BJ (cell line): ENCODE measurements at regions of chr17 and their contacts with region 1.

Region 1: DNA sequence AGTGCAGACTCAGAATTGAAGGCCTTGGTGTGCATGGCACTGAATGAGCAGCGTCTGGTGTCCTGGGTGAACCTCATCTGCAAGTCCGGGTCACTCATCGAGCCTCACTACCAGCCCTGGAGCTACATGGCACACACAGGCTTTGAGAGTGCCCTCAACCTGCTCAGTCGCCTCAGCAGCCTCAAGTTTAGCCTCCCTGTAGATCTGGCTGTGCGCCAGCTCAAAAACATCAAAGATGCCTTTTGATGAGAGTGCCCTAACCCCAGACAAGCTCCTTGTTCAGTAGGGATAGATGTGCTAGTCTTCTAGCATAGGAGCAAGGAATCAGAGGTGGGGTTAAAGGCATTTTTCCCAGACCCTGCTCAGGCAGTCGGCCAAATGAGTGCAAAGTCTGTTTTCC is 6.7 kb upstream of the RPL27 start:
- DNase-seq: no peak
- H3K4me3 ChIP-seq: no peak overlapping the region
- H3K27me3 ChIP-seq: no peaks in the 10 kb centered on the region
- CTCF ChIP-seq: no peak

Region 2: GRCh38 chr17:42835732-42836131 is 155.7 kb before region 1 on chr17:
- CTCF ChIA-PET with region 1: no interaction called
- POLR2A ChIA-PET with region 1: no interaction called
- DNase-seq: no peak
- H3K4me3 ChIP-seq: no peak overlapping the region
- H3K27me3 ChIP-seq: no peaks in the 10 kb centered on the region
- CTCF ChIP-seq: no peak

Region 3: GRCh38 chr17:42878123-42878880 is 113.2 kb before region 1 on chr17:
- CTCF ChIA-PET with region 1: no interaction called
- POLR2A ChIA-PET with region 1: no interaction called
- DNase-seq: no peak
- H3K4me3 ChIP-seq: no peak overlapping the region
- H3K27me3 ChIP-seq: peaks cover 13% of the 10 kb centered on the region; the same call in 1 of the 2 replicates
- CTCF ChIP-seq: no peak

Region 4: GRCh38 chr17:43006639-43007551 is 15.4 kb after region 1 on chr17 and contains the start of gene IFI35:
- CTCF ChIA-PET with region 1: no interaction called
- POLR2A ChIA-PET with region 1: interaction called, 13 read pairs
- DNase-seq: peak; percentile 51
- H3K4me3 ChIP-seq: peak within 1 kb of the TSS; percentile 58
- H3K27me3 ChIP-seq: no peaks in the 10 kb centered on the region
- CTCF ChIP-seq: peak; percentile 37; the same call in 1 of the 2 replicates
- polyA plus RNA-seq, gene IFI35: 27.7 and 42.5 TPM in 2 replicates

Region 5: GRCh38 chr17:43030137-43030767 is 38.8 kb after region 1 on chr17:
- CTCF ChIA-PET with region 1: no interaction called
- POLR2A ChIA-PET with region 1: no interaction called
- DNase-seq: no peak
- H3K4me3 ChIP-seq: no peak overlapping the region
- H3K27me3 ChIP-seq: no peaks in the 10 kb centered on the region
- CTCF ChIP-seq: no peak